Activated T-helper 1 cell treated with anti-CD3 and anti-CD28 coated beads, Interleukin-12 subunit alpha, Interleukin-12 subunit beta, Interleukin-2, Interleukin-4 antibody, amounts not matched to agents 30 ng/mL and 10 ng/mL and 1 ng/mL, durations not matched to agents 14 hours and 24 hours and 36 hours (primary cell): ENCODE measurements at regions of chr17 and their contacts with region 1.

Region 1: GRCh38 chr17:68420065-68420464 is 37.2 kb downstream of the WIPI1 start:
- DNase-seq: no peak
- H3K4me3 Mint-ChIP-seq: no peak overlapping the region
- H3K27ac Mint-ChIP-seq: no peak overlapping the region
- H3K4me1 Mint-ChIP-seq: peaks cover 12% of the 10 kb centered on the region
- H3K27me3 Mint-ChIP-seq: no peaks in the 10 kb centered on the region

Region 2: GRCh38 chr17:68398691-68399637 is 21.1 kb before region 1 on chr17:
- intact Hi-C with region 1: loop called (anchors 2 kb)
- DNase-seq: peak; percentile 9
- H3K4me3 Mint-ChIP-seq: peak overlapping the region; percentile 49
- H3K27ac Mint-ChIP-seq: peak overlapping the region; percentile 85
- H3K4me1 Mint-ChIP-seq: peaks cover 51% of the 10 kb centered on the region
- H3K27me3 Mint-ChIP-seq: no peaks in the 10 kb centered on the region